PC-9 (cell line): ENCODE measurements at regions of chr3 and their contacts with region 1.

Region 1: DNA sequence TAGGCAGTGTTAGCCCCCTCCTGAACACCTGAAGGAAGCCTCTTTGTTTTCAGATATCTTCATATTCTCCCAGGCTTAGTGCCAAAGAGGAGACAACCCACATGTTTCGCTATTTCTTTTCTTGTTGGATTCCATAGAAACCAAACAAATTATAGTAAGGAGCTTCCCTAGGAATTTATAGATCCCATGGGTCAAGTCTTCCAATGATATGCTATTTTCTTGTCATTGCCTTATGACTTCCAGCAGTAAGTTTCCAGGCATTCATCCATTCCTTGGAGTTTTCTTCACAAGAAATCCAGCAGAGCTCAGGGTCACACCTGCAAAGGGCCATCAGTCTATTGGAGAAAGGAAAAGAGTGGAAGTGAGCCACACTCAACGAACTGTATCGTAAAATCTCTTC is 9.9 kb upstream of the KCNMB2 start:
- DNase-seq: no peak
- H3K4me3 ChIP-seq: no peak overlapping the region
- H3K27ac ChIP-seq: no peak overlapping the region
- H3K4me1 ChIP-seq: no peaks in the 10 kb centered on the region
- H3K27me3 ChIP-seq: no peaks in the 10 kb centered on the region
- CTCF ChIP-seq: no peak

Region 2: DNA sequence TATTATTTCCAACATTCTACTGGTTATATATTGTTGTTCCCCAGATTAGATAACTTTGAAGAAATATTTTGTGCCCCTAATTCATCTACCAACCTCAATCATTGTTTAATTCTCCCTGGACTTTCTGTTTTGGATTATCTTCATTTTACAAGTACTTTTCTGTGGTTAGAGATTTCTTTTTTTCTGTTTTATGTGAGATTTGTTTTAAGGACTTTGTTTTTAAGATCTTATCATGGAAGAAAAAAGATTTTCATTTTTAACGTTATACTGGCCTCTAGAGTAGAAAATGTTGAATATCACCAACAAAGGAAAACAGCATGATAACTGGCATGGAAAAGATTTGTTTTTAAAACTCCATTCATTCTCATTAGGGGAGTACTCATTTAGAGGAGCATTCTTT is 201.0 kb before region 1 on chr3:
- CTCF ChIA-PET with region 1: no interaction called
- POLR2A ChIA-PET with region 1: no interaction called
- intact Hi-C with region 1: no loop called
- DNase-seq: no peak
- H3K4me3 ChIP-seq: no peak overlapping the region
- H3K27ac ChIP-seq: no peak overlapping the region
- H3K4me1 ChIP-seq: peaks cover 13% of the 10 kb centered on the region
- H3K27me3 ChIP-seq: no peaks in the 10 kb centered on the region
- CTCF ChIP-seq: peak; percentile 72

Region 3: DNA sequence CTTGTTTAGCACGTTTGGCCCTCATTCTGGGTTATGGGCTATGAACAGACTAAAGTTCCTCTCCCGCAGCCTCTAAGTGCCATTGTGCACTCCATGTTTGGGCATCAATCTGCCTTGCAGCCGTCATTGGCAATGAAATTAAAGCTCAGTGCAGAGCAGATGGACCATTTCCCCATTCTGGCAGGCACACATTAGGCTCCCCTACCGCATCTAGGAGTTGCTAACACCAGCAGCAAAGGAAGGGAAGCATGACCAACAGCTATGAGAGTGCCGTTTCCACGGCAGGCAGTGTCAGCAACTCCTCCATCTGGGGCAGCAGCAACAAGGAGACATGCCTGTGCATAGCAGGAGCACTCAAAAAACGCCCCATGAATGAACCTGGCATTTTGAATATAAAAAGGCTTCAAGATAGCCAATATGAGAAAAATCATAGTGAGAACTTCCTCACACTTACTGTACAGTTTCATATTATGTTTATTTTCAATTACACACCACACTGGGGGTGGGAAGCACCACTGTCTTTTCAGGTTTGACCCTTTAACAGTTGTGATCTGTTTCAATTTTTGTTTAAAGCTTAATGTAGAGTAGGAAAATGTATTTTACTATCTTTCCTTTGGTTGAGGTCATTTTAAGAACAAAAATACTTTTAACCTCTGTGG is 228.7 kb after region 1 on chr3:
- CTCF ChIA-PET with region 1: no interaction called
- POLR2A ChIA-PET with region 1: interaction called, 13 read pairs
- intact Hi-C with region 1: no loop called
- DNase-seq: no peak
- H3K4me3 ChIP-seq: no peak overlapping the region
- H3K27ac ChIP-seq: no peak overlapping the region
- H3K4me1 ChIP-seq: no peaks in the 10 kb centered on the region
- H3K27me3 ChIP-seq: no peaks in the 10 kb centered on the region
- CTCF ChIP-seq: no peak